ENCODE measurements at regions of chr10 and their contacts with region 1.

Region 1: DNA sequence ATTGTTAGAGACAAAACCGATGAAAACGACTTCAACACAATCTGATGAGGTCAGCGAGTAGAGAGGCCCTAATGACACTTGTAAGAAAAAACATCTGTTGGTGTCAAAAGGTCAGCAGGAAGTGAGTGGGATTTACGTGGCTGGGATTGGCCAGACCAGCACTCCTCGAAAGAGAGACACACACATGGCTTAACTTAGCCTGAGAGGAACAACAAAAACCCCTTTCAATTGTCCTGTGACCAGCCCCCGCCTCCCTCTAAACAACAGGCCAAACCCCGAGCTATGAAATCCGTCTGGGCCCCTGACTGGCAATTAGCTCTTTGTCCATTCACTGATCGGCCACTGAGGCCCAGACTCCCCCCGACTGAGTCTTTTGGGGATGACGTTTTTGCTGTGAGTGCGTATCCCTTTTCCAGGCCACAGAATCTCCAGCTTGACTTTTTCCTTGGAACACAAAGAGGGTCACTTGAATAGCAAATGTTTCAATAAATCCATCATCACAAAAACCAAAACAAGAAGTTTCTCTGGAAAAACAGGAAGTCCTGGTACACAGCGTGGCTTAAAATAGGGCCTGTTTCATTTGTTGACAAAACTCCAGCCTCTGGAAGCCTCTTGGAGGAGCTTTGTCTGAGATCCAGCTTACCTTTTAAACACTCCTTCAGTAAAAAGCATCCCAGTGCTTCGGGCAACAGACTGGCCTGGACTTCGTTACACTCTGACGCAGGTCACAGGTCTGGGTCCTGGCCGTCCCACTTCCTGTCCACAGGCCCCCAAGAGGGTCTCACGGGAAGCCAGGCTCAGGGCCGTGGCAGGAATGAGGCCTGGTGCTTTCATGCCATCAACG is 103.0 kb downstream of the CTBP2 start:
- DNase-seq: no peak
- ATAC-seq: peak; percentile 44 to 63 (median 51)
- H3K4me3 ChIP-seq: no peak overlapping the region
- H3K27ac ChIP-seq: peak overlapping the region; percentile 61 to 72 (median 70)
- H3K4me1 ChIP-seq: peaks cover 0 to 10% (median 7%) of the 10 kb centered on the region in 4 donors
- H3K27me3 ChIP-seq: no peaks in the 10 kb centered on the region
- CTCF ChIP-seq: no peak
- POLR2A ChIP-seq: no peak

Region 2: GRCh38 chr10:124992462-124993344 is 64.7 kb before region 1 on chr10:
- intact Hi-C with region 1: loop called in 1 of 2 experiments (anchors 10 kb)
- DNase-seq: peak; percentile 67 to 85 (median 72)
- ATAC-seq: peak; percentile 71 to 82 (median 78)
- H3K4me3 ChIP-seq: no peak overlapping the region
- H3K27ac ChIP-seq: no peak overlapping the region
- H3K4me1 ChIP-seq: peaks cover 0 to 6% (median 0%) of the 10 kb centered on the region in 4 donors
- H3K27me3 ChIP-seq: no peaks in the 10 kb centered on the region
- CTCF ChIP-seq: peak; percentile 68 to 72 (median 70)
- POLR2A ChIP-seq: no peak

Region 3: GRCh38 chr10:125263555-125263954 is 206.2 kb after region 1 on chr10:
- intact Hi-C with region 1: no loop called
- DNase-seq: no peak
- ATAC-seq: no peak
- H3K4me3 ChIP-seq: no peak overlapping the region
- H3K27ac ChIP-seq: no peak overlapping the region
- H3K4me1 ChIP-seq: no peaks in the 10 kb centered on the region
- H3K27me3 ChIP-seq: no peaks in the 10 kb centered on the region
- CTCF ChIP-seq: no peak
- POLR2A ChIP-seq: no peak

Measured in right lobe of liver (tissue), 6 donors.